Activated CD4-positive, alpha-beta memory T cell treated with anti-CD3 and anti-CD28 coated beads, Interleukin-2, amount 10 ng/mL, durations not matched to agents 7 days and 5 days (primary cell): ENCODE measurements at regions of chr3 and their contacts with region 1.

Region 1: DNA sequence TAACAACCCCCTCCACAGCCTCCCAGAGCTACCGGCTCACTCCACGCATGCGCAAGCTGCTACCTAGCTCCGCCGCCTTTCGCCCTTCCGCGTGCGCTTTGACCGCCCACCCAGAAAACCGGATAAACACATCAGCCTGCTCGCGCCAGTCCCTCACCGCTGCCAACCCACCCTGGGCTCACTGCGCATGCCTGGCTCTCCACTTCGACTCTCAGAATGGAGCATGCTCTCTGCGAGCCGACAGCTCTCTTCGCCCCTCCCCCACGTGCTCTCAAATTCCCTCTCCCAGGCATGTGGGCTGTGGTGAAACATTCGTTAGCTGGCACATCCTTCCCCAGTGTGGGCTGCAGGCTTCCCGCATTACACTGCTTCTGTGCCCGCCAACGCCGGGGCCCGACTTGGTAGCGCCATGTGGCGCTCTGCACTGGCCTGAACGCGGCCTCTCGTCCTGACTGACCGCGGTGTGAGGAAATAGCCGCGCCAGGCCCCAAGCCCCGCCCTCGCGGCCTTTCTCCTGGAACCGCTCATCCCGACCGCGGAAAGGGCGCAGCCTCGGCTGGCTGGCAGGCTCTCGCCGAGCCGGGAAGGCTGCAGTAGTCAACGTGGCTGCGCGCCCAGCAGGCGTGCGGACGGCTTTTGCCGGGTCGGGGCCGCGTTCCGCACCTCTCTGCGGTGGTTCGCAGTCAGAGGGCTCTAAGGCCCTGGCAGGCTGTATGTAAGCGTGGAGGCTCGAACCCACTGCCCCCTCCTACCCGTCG is 445 bp upstream of the MSL2 start:
- DNase-seq: peak; percentile 99
- H3K4me3 Mint-ChIP-seq: peak overlapping the region; percentile 98
- H3K27ac Mint-ChIP-seq: peak overlapping the region; percentile 97
- H3K4me1 Mint-ChIP-seq: peaks cover 32% of the 10 kb centered on the region
- H3K27me3 Mint-ChIP-seq: peaks cover 2% of the 10 kb centered on the region

Region 2: GRCh38 chr3:135905058-135905724 is 291.4 kb before region 1 on chr3:
- CTCF ChIA-PET with region 1: no interaction called
- POLR2A ChIA-PET with region 1: no interaction called
- DNase-seq: no peak
- H3K4me3 Mint-ChIP-seq: no peak overlapping the region
- H3K27ac Mint-ChIP-seq: no peak overlapping the region
- H3K4me1 Mint-ChIP-seq: no peaks in the 10 kb centered on the region
- H3K27me3 Mint-ChIP-seq: no peaks in the 10 kb centered on the region

Region 3: GRCh38 chr3:136186344-136186743 is 10.2 kb before region 1 on chr3:
- CTCF ChIA-PET with region 1: interaction called, 4 read pairs
- POLR2A ChIA-PET with region 1: interaction called, 34 read pairs
- DNase-seq: peak; percentile 30
- H3K4me3 Mint-ChIP-seq: no peak overlapping the region
- H3K27ac Mint-ChIP-seq: peak overlapping the region; percentile 36
- H3K4me1 Mint-ChIP-seq: peaks cover 81% of the 10 kb centered on the region
- H3K27me3 Mint-ChIP-seq: no peaks in the 10 kb centered on the region

Region 4: DNA sequence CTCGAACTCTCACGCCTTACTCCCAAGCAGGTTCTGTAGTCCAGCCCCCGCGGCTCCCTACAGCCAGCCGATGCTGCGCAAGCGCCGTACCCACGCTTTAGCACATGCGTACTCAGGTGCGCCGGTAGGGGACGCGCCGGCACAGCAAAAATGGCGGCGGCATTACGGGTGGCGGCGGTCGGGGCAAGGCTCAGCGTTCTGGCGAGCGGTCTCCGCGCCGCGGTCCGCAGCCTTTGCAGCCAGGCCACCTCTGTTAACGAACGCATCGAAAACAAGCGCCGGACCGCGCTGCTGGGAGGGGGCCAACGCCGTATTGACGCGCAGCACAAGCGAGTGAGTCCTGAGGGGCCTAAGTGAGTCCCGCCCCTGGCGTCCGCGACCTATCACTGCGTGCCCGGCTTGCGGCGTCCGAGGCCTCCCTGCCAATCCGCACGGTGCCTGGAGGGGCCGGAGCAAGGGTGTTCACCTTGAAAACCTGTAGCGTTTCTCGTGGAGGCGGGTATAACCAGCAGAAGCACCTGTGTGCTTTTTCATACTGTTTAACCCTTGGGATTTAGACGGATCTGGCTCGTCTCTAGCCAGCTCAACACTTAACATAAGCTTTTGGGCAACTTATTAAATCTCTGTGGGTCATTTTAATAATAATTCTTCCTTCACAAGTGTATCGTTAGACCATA is 53.8 kb after region 1 on chr3 and contains the start of gene PCCB:
- CTCF ChIA-PET with region 1: interaction called, 27 read pairs
- POLR2A ChIA-PET with region 1: interaction called, 53 read pairs
- DNase-seq: peak; percentile 93
- H3K4me3 Mint-ChIP-seq: peak within 1 kb of the TSS; percentile 83
- H3K27ac Mint-ChIP-seq: peak within 1 kb of the TSS; percentile 82
- H3K4me1 Mint-ChIP-seq: peaks cover 23% of the 10 kb centered on the region
- H3K27me3 Mint-ChIP-seq: no peaks in the 10 kb centered on the region
- total RNA-seq, gene PCCB: 24.7 to 26.9 TPM